ENCODE measurements at regions of chr6 and their contacts with region 1.

Region 1: GRCh38 chr6:72522719-72523141 is 99.1 kb upstream of the KCNQ5 start:
- DNase-seq: no peak
- ATAC-seq: peak; percentile 86
- H3K4me3 ChIP-seq: no peak overlapping the region
- H3K27ac ChIP-seq: no peak overlapping the region
- H3K4me1 ChIP-seq: no peaks in the 10 kb centered on the region
- H3K27me3 ChIP-seq: no peaks in the 10 kb centered on the region; a peak in 1 of 4 replicates
- CTCF ChIP-seq: peak; percentile 32 to 55 (median 50)
- EP300 ChIP-seq: no peak
- POLR2A ChIP-seq: no peak
- RAD21 ChIP-seq: 0 out of 2 replicates have a peak, but pooled peaks have one; percentile 18

Region 2: DNA sequence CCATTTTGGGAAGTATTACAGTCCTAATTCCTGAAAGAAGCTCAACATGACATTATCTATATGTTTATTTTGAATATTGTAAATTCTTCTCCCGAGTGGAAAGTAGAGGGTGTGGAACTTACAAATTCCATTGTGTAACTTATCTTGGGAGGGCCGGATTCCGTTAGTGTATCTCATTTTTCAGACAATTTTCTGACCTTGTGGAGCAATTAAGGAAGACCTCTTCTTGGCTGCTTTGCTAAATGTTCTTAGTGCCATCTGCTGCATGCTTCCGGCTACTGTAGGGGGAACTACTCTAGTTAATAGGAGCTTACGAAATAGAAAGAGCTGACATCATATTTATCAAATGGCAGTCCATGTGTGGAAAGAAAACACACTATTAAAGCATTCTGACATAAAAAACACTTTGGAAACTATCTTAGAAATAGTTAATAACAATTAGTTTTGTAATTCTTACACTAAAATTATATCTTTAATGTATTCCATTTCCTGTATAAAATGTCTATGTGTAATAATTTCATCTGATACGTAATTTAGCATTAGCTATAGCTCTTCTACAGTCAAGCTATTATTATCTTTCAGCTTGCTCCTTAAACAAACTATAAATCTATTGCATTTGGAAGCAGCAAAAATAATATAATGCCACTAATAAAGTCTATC is 57.7 kb after region 1 on chr6:
- CTCF ChIA-PET with region 1: interaction called, 11 read pairs
- POLR2A ChIA-PET with region 1: no interaction called
- RAD21 ChIA-PET with region 1: interaction called, 3 read pairs
- SMC1A ChIA-PET with region 1: no interaction called
- in situ Hi-C with region 1: no loop called
- intact Hi-C with region 1: no loop called
- DNase-seq: no peak
- ATAC-seq: peak; percentile 88
- H3K4me3 ChIP-seq: no peak overlapping the region
- H3K27ac ChIP-seq: no peak overlapping the region
- H3K4me1 ChIP-seq: no peaks in the 10 kb centered on the region
- H3K27me3 ChIP-seq: no peaks in the 10 kb centered on the region
- CTCF ChIP-seq: peak; percentile 28 to 37 (median 34); a peak in 5 of 6 replicates
- EP300 ChIP-seq: no peak
- POLR2A ChIP-seq: no peak
- RAD21 ChIP-seq: peak; percentile 37

Region 3: DNA sequence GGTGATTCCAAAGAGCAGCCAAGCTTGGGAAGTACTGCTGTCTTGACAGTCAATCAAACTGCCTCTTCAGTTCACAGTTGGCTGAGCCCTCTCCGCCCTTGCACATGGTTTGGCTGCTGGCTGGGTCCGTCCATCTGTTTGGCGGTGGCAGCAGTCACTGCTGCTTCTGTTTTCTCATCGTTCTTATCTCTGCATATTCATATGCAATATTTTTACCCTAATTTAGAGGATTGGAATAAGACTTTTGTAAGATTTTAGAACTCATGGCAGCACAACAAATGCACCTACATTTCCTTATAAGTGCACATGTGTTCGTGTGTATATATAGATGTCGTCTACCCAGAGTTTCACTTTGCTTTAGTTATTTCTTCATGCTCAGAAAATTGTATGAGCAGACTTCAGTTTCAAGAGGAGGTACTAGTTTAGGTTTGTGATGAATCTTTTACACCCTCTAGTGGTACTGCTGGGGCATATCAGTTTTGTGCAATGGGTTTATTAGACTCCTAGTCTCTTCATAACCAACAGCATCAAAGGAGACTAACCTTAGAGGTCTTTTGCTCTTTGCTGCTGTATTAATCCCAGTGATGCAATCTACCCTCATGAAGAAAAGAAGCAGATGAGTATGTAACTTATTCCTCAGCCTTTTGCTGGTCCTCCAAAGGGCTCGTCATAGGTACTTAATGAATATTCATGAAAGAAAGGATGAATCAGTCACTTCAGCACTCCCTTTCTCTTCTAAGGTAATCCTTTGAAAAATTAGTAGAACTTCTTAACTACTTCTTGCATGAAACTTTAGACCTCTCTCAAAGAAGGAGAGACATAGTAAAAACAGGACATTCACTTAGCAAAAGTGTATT is 658.3 kb after region 1 on chr6:
- CTCF ChIA-PET with region 1: interaction called, 4 read pairs
- POLR2A ChIA-PET with region 1: no interaction called
- RAD21 ChIA-PET with region 1: no interaction called
- SMC1A ChIA-PET with region 1: no interaction called
- in situ Hi-C with region 1: no loop called
- intact Hi-C with region 1: loop called (anchors 5 kb)
- DNase-seq: peak; percentile 53
- ATAC-seq: peak; percentile 94
- H3K4me3 ChIP-seq: peak overlapping the region; percentile 25; the same call in 1 of the 2 replicates
- H3K27ac ChIP-seq: no peak overlapping the region
- H3K4me1 ChIP-seq: peaks cover 23% of the 10 kb centered on the region
- H3K27me3 ChIP-seq: no peaks in the 10 kb centered on the region
- CTCF ChIP-seq: peak; percentile 79 to 91 (median 85)
- EP300 ChIP-seq: no peak
- POLR2A ChIP-seq: no peak
- RAD21 ChIP-seq: peak; percentile 97

Measured in GM12878 (cell line).